ENCODE measurements at regions of chr20 and their contacts with region 1.

Region 1: DNA sequence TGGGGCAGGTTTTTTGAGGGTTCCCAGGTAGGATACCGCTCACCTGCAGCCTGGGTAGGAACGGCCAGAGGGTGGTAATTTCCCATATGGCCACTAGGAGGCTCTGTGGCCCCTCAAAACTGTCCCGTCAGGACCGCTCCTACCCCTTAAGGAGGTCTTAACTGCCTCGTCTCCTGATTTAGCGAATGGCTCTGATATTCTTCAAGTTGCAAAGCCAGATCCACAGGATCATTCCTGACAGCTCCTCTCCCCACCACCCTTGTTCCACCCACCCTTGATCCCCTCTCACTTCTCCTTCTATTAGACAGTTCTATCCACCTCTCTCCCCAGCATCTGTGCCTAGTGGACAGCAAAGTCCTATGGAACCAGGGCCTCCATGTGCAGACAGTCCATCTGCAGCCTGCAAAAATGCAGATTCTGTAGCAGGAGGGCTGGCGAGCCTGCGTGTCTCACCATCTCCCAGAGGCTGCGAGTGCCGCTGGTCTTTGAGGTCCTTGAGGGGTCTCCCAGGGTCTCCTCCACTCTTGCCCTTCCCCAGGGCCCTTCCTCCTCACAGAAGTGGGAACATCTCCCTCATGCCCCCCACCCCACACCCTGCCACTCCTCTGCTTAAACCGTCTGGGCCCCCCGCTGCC is 34.3 kb upstream of the ZBP1 start:
- DNase-seq: peak in 1 of 2 donors; percentile 73
- ATAC-seq: peak; percentile 81
- H3K4me3 ChIP-seq: no peak overlapping the region
- H3K27ac ChIP-seq: no peak overlapping the region
- H3K4me1 ChIP-seq: no peaks in the 10 kb centered on the region
- H3K27me3 ChIP-seq: no peaks in the 10 kb centered on the region

Region 2: GRCh38 chr20:57879779-57880570 is 225.5 kb after region 1 on chr20:
- intact Hi-C with region 1: loop called in 1 of 2 experiments (anchors 5 kb)
- DNase-seq: no peak
- ATAC-seq: peak; percentile 51
- H3K4me3 ChIP-seq: no peak overlapping the region
- H3K27ac ChIP-seq: no peak overlapping the region
- H3K4me1 ChIP-seq: peaks cover 0 to 4% of the 10 kb centered on the region in 2 donors
- H3K27me3 ChIP-seq: no peaks in the 10 kb centered on the region

Region 3: GRCh38 chr20:58017237-58017969 is 362.9 kb after region 1 on chr20:
- intact Hi-C with region 1: loop called in 1 of 2 experiments (anchors 10 kb)
- DNase-seq: peak in 1 of 2 donors; percentile 66
- ATAC-seq: no peak
- H3K4me3 ChIP-seq: no peak overlapping the region
- H3K27ac ChIP-seq: no peak overlapping the region
- H3K4me1 ChIP-seq: no peaks in the 10 kb centered on the region
- H3K27me3 ChIP-seq: no peaks in the 10 kb centered on the region

Region 4: GRCh38 chr20:58087193-58087858 is 432.8 kb after region 1 on chr20:
- intact Hi-C with region 1: loop called (anchors 2 to 5 kb)
- DNase-seq: no peak
- ATAC-seq: no peak
- H3K4me3 ChIP-seq: no peak overlapping the region
- H3K27ac ChIP-seq: no peak overlapping the region
- H3K4me1 ChIP-seq: no peaks in the 10 kb centered on the region
- H3K27me3 ChIP-seq: no peaks in the 10 kb centered on the region